ENCODE measurements at regions of chr16 and their contacts with region 1.

Region 1: DNA sequence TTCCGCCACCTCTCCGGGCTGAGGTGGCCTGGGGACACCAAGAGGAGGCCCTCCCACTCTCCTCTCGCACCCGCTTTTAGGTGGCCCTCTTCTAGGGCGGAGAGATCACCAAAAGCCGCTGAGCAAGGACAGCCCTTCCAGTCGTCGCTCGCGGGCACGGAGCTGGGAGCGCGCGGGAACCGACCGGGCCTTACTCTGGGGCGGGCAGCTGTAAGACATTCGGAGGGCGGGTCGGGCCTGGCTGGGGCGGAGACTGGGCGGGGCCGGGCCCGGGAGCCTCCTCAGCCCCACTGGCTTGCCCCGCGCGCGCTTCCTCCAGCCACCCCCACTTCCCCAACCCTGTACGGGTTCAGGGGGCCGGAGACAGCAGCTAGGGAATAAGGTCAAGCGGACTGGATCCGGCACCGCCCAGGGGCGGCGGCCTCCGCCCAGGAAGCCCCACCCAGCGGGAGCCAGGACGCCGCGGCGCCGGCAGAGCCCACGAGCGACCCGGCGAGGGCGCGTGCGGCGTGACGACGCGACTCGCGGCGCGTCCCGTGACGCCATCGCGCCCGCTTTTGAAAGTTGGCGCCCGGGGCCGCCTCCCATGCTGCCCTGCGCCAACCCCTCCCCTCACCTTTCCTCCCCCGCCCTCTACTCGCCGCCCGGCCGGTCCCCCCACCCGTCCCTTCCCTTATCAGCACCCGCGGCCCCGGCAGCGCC is 351 bp upstream of the CTCF start:
- DNase-seq: peak; percentile 99
- ATAC-seq: peak; percentile 93
- H3K4me3 ChIP-seq: peak overlapping the region; percentile 96
- H3K27ac ChIP-seq: peak overlapping the region; percentile 100
- H3K4me1 ChIP-seq: peaks cover 28% of the 10 kb centered on the region
- H3K27me3 ChIP-seq: no peaks in the 10 kb centered on the region
- CTCF ChIP-seq: no peak

Region 2: DNA sequence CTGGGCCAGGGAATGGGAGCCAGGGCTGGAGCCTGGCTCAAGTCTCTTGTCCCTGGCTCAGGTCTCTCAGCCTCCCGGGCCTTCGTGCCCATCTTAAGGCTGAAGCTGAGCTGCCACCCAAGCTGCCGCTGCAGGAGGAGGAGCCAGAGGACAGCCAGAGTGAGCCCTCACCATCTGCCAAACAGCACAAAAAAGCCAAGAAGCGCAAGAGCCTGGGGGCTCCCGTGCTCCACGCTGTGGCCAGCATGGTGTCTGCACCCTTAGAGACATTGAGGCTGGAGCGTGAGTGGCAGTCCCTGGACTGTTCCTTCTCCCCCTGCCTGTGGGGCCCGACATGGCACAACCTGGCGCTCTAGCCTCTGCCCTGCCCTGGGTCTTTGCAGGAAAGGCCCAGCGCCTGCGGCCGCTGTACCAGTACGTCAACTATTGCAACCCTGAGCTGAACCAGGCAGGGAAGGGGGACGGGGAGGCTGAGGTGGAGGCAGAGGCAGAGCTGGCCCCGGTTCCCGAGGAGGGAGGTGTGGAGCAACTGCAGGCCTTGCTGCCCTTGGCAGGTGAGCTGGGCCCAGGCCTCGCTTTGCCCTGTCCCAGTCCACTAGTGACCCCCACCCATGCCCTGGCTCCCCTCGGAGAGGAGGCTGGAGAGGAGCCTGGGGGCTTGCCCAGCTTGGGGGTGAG is 106.0 kb after region 1 on chr16:
- intact Hi-C with region 1: loop called (anchors 10 kb)
- DNase-seq: peak; percentile 87
- ATAC-seq: peak; percentile 80
- H3K4me3 ChIP-seq: peak overlapping the region; percentile 76
- H3K27ac ChIP-seq: peak overlapping the region; percentile 89
- H3K4me1 ChIP-seq: peaks cover 23% of the 10 kb centered on the region
- H3K27me3 ChIP-seq: no peaks in the 10 kb centered on the region
- CTCF ChIP-seq: peak; percentile 78

Measured in upper lobe of right lung (tissue), 1 donor.